ENCODE measurements at regions of chr10 and their contacts with region 1.

Region 1: GRCh38 chr10:26799342-26799741 is 61.4 kb downstream of the ABI1 start:
- DNase-seq: peak in 1 of 2 donors; percentile 42
- ATAC-seq: no peak
- H3K4me3 ChIP-seq: no peak overlapping the region
- H3K4me3 Mint-ChIP-seq: peak overlapping the region; percentile 43
- H3K27ac ChIP-seq: peak overlapping the region; percentile 7
- H3K27ac Mint-ChIP-seq: peak overlapping the region in 1 of 2 donors; percentile 31
- H3K4me1 ChIP-seq: peaks cover 9% of the 10 kb centered on the region
- H3K4me1 Mint-ChIP-seq: peaks cover 77 to 83% of the 10 kb centered on the region in 2 donors
- H3K27me3 ChIP-seq: no peaks in the 10 kb centered on the region
- H3K27me3 Mint-ChIP-seq: no peaks in the 10 kb centered on the region
- CTCF ChIP-seq: no peak

Region 2: GRCh38 chr10:26725837-26726727 is 73.3 kb before region 1 on chr10:
- intact Hi-C with region 1: no loop called
- DNase-seq: peak in 1 of 2 donors; percentile 81
- ATAC-seq: peak in 2 of 3 donors; percentile 42 to 45
- H3K4me3 ChIP-seq: no peak overlapping the region
- H3K4me3 Mint-ChIP-seq: no peak overlapping the region
- H3K27ac ChIP-seq: no peak overlapping the region
- H3K27ac Mint-ChIP-seq: no peak overlapping the region
- H3K4me1 ChIP-seq: peaks cover 14% of the 10 kb centered on the region
- H3K4me1 Mint-ChIP-seq: peaks cover 14% of the 10 kb centered on the region in 2 donors
- H3K27me3 ChIP-seq: no peaks in the 10 kb centered on the region
- H3K27me3 Mint-ChIP-seq: no peaks in the 10 kb centered on the region
- CTCF ChIP-seq: peak; percentile 95

Region 3: DNA sequence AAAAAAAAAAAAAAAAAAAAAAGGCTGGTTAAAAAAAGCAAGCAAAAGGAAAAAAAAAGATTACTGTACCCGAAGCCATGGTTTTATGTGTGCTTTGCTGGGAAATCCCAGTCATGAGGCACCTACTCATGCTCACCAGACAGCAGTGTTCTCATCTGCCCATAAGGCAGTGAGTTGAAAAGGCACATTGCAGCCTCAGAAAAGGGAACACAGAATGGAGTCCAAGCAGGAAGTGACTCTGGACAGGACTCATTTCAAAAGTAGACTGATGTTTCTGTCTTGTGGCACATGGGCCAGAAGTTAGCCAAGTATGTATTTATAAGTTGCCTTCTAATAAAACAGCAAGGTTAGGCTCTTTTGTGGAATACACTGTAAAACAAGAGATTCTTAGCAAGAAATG is 61.6 kb before region 1 on chr10:
- intact Hi-C with region 1: no loop called
- DNase-seq: peak in 1 of 2 donors; percentile 56
- ATAC-seq: peak; percentile 29 to 50 (median 47)
- H3K4me3 ChIP-seq: no peak overlapping the region
- H3K4me3 Mint-ChIP-seq: no peak overlapping the region
- H3K27ac ChIP-seq: no peak overlapping the region
- H3K27ac Mint-ChIP-seq: peak overlapping the region; percentile 39 to 64
- H3K4me1 ChIP-seq: peaks cover 3% of the 10 kb centered on the region
- H3K4me1 Mint-ChIP-seq: peaks cover 0 to 8% of the 10 kb centered on the region in 2 donors
- H3K27me3 ChIP-seq: no peaks in the 10 kb centered on the region
- H3K27me3 Mint-ChIP-seq: no peaks in the 10 kb centered on the region
- CTCF ChIP-seq: no peak

Region 4: GRCh38 chr10:26839966-26840627 is 40.8 kb after region 1 on chr10:
- intact Hi-C with region 1: loop called (anchors 5 kb)
- DNase-seq: no peak
- ATAC-seq: no peak
- H3K4me3 ChIP-seq: no peak overlapping the region
- H3K4me3 Mint-ChIP-seq: peak overlapping the region; percentile 57
- H3K27ac ChIP-seq: no peak overlapping the region
- H3K27ac Mint-ChIP-seq: peak overlapping the region; percentile 85 to 90
- H3K4me1 ChIP-seq: peaks cover 26% of the 10 kb centered on the region
- H3K4me1 Mint-ChIP-seq: peaks cover 81 to 88% of the 10 kb centered on the region in 2 donors
- H3K27me3 ChIP-seq: no peaks in the 10 kb centered on the region
- H3K27me3 Mint-ChIP-seq: no peaks in the 10 kb centered on the region
- CTCF ChIP-seq: no peak

Region 5: GRCh38 chr10:27088119-27089044 is 289.0 kb after region 1 on chr10:
- intact Hi-C with region 1: no loop called
- DNase-seq: no peak
- ATAC-seq: no peak
- H3K4me3 ChIP-seq: no peak overlapping the region
- H3K4me3 Mint-ChIP-seq: no peak overlapping the region
- H3K27ac ChIP-seq: no peak overlapping the region
- H3K27ac Mint-ChIP-seq: no peak overlapping the region
- H3K4me1 ChIP-seq: no peaks in the 10 kb centered on the region
- H3K4me1 Mint-ChIP-seq: no peaks in the 10 kb centered on the region
- H3K27me3 ChIP-seq: no peaks in the 10 kb centered on the region
- H3K27me3 Mint-ChIP-seq: no peaks in the 10 kb centered on the region
- CTCF ChIP-seq: no peak